Activated CD4-positive, alpha-beta T cell treated with anti-CD3 and anti-CD28 coated beads for 36 hours (primary cell): ENCODE measurements at regions of chr17 and their contacts with region 1.

Region 1: DNA sequence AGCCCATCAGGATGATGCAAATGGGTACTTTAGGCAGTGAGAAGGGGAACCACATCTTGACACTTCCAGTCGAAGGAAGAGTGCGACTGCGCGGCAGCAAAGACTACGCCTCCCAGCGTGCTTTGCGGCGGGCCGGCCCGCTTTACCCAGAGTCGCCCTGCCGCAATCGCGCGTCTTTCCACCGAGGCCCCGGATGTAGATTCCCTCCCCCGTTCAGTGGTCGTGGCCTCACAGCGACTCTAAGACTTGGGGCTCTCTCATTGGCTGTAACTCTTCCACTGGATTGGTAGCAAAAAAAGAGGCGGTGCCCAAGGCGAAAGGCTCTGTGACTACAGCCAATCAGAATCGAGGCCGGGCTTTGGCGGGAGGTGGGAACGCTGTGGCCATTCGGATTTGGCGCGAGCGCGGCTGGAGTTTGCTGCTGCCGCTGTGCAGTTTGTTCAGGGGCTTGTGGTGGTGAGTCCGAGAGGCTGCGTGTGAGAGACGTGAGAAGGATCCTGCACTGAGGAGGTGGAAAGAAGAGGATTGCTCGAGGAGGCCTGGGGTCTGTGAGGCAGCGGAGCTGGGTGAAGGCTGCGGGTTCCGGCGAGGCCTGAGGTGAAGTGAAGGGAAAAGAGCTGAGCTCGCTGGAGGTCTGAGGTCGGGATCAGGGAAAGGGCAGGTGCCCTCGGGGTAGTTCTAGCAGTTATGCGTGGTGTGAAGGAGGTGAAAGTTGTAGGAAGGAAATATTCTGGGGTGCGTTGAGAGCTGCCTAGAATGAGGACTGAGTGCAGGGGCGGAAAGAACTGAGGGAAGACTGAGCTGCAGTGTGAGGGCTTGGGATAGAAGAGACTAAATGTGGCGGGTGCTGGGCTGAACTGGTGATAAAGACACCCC is at the start of gene CDC6:
- DNase-seq: peak; percentile 99
- ATAC-seq: peak; percentile 87
- H3K4me3 Mint-ChIP-seq: peak within 1 kb of the TSS; percentile 100
- H3K27ac Mint-ChIP-seq: peak within 1 kb of the TSS; percentile 100
- H3K4me1 Mint-ChIP-seq: peaks cover 60% of the 10 kb centered on the region
- H3K27me3 Mint-ChIP-seq: no peaks in the 10 kb centered on the region
- total RNA-seq, gene CDC6: 105 to 171 TPM

Region 2: GRCh38 chr17:39927101-39927928 is 360.4 kb before region 1 on chr17 and contains the starts of genes LRRC3C and ORMDL3:
- CTCF ChIA-PET with region 1: no interaction called
- POLR2A ChIA-PET with region 1: no interaction called
- intact Hi-C with region 1: loop called in 1 of 2 experiments (anchors 1 kb)
- DNase-seq: peak; percentile 96
- ATAC-seq: peak; percentile 78
- H3K4me3 Mint-ChIP-seq: peak within 1 kb of the TSS; percentile 85
- H3K27ac Mint-ChIP-seq: peak within 1 kb of the TSS; percentile 95
- H3K4me1 Mint-ChIP-seq: peaks cover 56% of the 10 kb centered on the region
- H3K27me3 Mint-ChIP-seq: no peaks in the 10 kb centered on the region
- total RNA-seq, gene LRRC3C: not detected
- total RNA-seq, gene ORMDL3: 46.8 to 64.9 TPM

Region 3: DNA sequence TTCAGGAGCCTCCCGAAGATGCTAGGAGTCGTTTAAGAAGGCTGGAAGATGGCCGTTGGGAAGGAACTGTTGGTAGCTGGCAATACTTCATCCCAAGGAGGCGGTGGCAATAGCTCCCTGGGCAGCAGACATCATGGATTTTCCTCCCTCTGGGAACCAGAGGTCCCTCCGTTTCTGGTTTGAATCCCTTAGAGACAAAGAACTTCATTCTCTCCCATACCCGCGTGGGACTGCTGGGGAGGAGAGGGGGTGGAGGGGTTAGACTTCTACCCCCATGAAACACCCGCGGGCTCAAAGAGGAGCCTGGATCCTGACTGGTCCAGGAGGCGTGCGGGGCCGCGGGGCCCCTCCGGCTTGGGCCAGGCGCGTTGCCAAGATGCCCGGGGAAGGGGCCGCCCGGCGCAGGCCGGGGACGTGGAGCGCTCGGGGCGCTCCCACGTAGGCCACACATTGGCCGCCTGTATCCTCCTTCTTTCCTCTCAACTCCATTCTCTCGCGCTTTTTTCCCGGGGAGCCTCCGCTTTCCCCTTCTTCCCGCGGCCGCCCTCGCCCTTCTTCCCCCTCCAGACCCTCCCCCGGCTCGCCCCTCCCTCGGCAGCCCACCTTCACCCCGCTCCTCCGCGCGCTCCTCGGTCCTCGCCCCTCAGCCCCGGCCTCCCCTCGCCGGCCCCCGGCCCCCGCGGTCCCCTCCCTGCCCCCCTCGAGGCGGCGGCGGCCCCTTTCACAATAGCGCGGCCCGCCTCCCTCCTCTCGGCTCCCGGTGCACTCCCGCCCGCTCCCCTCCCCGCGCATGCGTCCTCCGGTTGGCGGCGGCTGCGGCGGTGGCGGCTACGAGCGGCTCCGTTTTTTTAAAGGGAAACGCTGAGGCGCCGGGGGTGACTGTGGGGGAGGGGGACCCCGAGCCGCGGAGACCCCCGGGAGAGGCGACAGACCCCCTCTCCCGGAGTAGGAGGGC is 166.3 kb before region 1 on chr17 and contains the start of gene MSL1:
- CTCF ChIA-PET with region 1: interaction called, 3 read pairs
- POLR2A ChIA-PET with region 1: no interaction called
- intact Hi-C with region 1: loop called in 1 of 2 experiments (anchors 1 kb)
- DNase-seq: peak; percentile 92
- ATAC-seq: peak; percentile 69
- H3K4me3 Mint-ChIP-seq: peak within 1 kb of the TSS; percentile 79
- H3K27ac Mint-ChIP-seq: peak within 1 kb of the TSS; percentile 57
- H3K4me1 Mint-ChIP-seq: peaks cover 29% of the 10 kb centered on the region
- H3K27me3 Mint-ChIP-seq: no peaks in the 10 kb centered on the region
- total RNA-seq, gene MSL1: 81.7 to 89.6 TPM

Region 4: DNA sequence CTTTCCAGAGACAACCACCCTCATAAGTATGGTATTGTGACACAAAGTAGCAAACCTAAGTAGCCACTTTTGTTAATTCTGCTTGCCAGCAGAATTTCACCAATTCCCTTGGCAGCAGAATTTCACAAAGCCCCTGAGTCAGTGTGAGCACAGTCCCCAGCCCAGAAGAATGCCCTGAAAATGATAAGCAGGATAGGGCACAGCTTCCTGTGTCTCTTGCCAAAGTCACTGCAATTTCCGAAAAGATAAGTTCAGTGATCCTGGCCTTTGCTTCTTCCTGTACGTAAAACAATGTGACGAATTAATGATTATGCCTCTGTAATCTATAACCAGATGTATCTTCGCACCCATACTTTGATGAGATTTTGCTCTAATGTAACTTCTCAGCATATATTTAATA is 84.6 kb before region 1 on chr17:
- CTCF ChIA-PET with region 1: interaction called, 30 read pairs
- POLR2A ChIA-PET with region 1: interaction called, 8 read pairs
- intact Hi-C with region 1: loop called (anchors 1 kb)
- DNase-seq: no peak
- ATAC-seq: no peak
- H3K4me3 Mint-ChIP-seq: no peak overlapping the region
- H3K27ac Mint-ChIP-seq: no peak overlapping the region
- H3K4me1 Mint-ChIP-seq: peaks cover 5% of the 10 kb centered on the region
- H3K27me3 Mint-ChIP-seq: peaks cover 2% of the 10 kb centered on the region

Region 5: DNA sequence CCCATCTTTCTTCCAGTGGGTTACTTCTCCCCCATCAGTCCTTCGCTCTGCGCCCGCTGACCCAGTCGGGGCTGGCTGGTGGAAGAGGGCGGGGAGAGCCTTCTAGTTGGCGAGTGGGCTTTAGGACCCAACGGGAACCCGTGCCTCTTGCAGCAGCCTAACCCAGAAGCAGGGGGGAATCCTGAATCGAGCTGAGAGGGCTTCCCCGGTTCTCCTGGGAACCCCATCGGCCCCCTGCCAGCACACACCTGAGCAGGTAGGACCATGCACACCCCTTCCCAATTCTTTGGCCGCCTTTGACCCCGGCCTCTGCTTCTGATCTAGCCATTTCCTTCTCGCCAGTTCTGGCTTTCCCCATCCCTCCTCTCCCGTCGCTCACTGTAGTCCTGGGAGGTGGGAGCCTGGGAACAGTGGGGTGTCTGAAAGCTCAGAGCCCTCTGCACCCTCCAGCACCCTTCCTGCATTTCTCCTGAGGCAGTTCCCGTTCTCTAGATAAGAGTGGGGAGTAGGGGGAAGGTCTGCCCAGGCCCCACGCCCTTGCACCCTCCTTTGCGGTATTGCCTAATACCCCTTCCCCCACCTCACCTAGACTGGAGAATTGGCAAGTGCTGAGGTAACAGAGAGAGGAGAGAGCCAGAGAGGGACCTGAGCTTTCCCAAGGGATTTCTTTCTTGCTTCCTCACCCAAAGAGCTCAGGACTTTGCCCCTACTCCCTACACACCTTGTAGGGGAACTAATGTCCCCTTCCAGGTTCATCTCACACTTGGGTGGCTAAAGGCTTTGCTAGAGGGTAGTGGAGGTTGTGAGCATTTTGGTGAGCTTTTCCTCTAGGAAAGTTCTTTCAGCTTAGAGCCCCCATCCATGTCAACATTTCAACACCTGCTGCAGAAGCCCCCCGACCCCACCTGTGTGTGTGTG is 21.6 kb after region 1 on chr17 and contains the start of gene RARA:
- CTCF ChIA-PET with region 1: interaction called, 15 read pairs
- POLR2A ChIA-PET with region 1: interaction called, 10 read pairs
- intact Hi-C with region 1: no loop called
- DNase-seq: peak; percentile 50
- ATAC-seq: peak; percentile 34
- H3K4me3 Mint-ChIP-seq: no peak within 1 kb of the TSS
- H3K27ac Mint-ChIP-seq: no peak within 1 kb of the TSS
- H3K4me1 Mint-ChIP-seq: peaks cover 38% of the 10 kb centered on the region
- H3K27me3 Mint-ChIP-seq: no peaks in the 10 kb centered on the region
- total RNA-seq, gene RARA: 29.8 to 40.2 TPM

Region 6: DNA sequence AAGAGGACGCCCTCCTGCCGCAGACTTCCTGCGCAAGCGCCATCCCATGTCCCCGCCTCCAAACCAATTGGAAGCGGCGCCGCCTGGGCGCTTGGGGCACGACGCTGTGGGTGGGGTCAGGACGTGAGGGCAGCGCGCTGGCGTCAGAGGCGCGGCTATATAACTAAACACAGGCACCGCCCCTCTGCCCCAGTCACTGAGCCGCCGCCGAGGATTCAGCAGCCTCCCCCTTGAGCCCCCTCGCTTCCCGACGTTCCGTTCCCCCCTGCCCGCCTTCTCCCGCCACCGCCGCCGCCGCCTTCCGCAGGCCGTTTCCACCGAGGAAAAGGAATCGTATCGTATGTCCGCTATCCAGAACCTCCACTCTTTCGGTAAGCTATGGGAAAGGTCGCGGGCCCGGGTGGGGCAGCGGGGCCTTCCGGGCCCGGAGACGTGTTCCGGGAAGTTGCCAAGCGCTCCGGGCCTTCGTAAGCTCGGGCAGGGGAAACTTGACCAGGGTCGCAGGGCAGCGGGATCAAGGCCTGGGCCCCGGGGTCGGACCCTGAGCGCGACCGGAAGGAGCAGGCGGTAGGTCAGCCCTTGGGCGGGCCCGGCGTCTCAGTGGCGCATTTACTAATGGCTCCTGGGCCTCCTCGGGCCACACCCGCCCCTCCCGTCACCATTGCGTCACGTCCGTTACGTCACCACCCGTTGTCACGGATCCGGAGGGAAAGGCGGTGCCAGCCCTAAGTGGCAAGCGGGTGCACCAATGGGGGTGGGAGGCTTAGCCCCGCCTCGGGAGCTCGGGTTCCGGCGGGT is 1401.2 kb after region 1 on chr17 and contains the start of gene EIF1:
- CTCF ChIA-PET with region 1: no interaction called
- POLR2A ChIA-PET with region 1: interaction called, 3 read pairs
- intact Hi-C with region 1: loop called in 1 of 2 experiments (anchors 1 kb)
- DNase-seq: peak; percentile 100
- ATAC-seq: peak; percentile 81
- H3K4me3 Mint-ChIP-seq: peak within 1 kb of the TSS; percentile 97
- H3K27ac Mint-ChIP-seq: peak within 1 kb of the TSS; percentile 95
- H3K4me1 Mint-ChIP-seq: peaks cover 20% of the 10 kb centered on the region
- H3K27me3 Mint-ChIP-seq: no peaks in the 10 kb centered on the region
- total RNA-seq, gene EIF1: 869 to 977 TPM